ENCODE measurements at regions of chr10 and their contacts with region 1.

Region 1: GRCh38 chr10:89003344-89003743 is 12.7 kb downstream of the FAS start:
- DNase-seq: no peak
- H3K4me3 Mint-ChIP-seq: no peak overlapping the region
- H3K27ac Mint-ChIP-seq: peak overlapping the region; percentile 83
- H3K4me1 Mint-ChIP-seq: peaks cover 66% of the 10 kb centered on the region
- H3K27me3 Mint-ChIP-seq: no peaks in the 10 kb centered on the region

Region 2: DNA sequence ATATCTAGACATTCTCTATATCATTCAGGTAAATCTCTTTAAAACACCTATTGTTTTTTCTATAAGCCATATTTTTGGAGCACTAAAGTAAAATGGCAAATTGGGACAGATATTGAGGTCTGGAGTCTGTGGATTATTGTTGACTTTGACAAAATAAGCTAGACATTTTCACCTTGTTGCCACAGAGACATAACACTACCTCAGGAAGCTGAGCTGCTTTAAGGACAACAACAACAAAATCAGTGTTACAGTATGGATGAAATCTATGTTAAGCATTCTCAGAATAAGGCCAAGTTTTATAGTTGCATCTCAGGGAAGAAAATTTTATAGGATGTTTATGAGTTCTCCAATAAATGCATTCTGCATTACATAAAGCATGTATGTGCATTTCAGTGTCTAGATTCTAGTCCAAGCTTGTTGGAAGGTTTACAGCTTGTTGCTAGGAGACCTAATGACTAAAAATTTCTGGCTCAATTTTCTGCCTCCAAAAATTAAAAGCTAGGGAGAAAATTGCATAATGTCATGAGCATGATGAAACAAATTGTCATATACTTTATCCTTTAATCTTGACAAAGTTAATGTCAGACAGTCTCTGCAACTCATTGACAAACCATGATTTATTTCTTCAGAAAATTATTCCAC is 182.5 kb before region 1 on chr10:
- CTCF ChIA-PET with region 1: no interaction called
- POLR2A ChIA-PET with region 1: no interaction called
- intact Hi-C with region 1: loop called (anchors 1 kb)
- DNase-seq: no peak
- H3K4me3 Mint-ChIP-seq: no peak overlapping the region
- H3K27ac Mint-ChIP-seq: no peak overlapping the region
- H3K4me1 Mint-ChIP-seq: peaks cover 20% of the 10 kb centered on the region
- H3K27me3 Mint-ChIP-seq: no peaks in the 10 kb centered on the region

Region 3: GRCh38 chr10:88960802-88961201 is 42.5 kb before region 1 on chr10:
- CTCF ChIA-PET with region 1: interaction called, 4 read pairs
- POLR2A ChIA-PET with region 1: interaction called, 6 read pairs
- intact Hi-C with region 1: loop called (anchors 1 kb)
- DNase-seq: peak; percentile 46
- H3K4me3 Mint-ChIP-seq: no peak overlapping the region
- H3K27ac Mint-ChIP-seq: peak overlapping the region; percentile 73
- H3K4me1 Mint-ChIP-seq: peaks cover 29% of the 10 kb centered on the region
- H3K27me3 Mint-ChIP-seq: no peaks in the 10 kb centered on the region

Region 4: DNA sequence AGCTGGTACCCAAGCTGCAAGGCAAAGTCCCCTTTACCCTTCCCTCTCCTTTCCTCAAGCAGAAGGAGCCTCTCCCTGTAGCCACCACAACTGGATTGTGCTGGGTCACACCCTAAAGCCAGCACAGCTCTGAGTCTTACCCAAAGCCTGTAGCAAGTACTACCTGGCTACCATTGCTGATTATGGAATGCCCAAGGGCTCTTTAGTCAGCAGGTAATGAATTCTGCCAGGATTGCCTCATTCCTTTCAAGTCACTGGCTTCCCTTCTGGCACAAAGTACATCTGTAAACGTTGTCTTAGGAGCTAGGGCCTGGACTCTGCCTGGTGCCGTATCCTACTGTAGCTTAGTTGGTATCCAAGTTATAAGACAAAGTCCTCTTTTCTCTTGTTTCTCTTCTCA is 39.2 kb after region 1 on chr10:
- CTCF ChIA-PET with region 1: no interaction called
- POLR2A ChIA-PET with region 1: no interaction called
- intact Hi-C with region 1: no loop called
- DNase-seq: no peak
- H3K4me3 Mint-ChIP-seq: no peak overlapping the region
- H3K27ac Mint-ChIP-seq: no peak overlapping the region
- H3K4me1 Mint-ChIP-seq: peaks cover 5% of the 10 kb centered on the region
- H3K27me3 Mint-ChIP-seq: no peaks in the 10 kb centered on the region

Region 5: GRCh38 chr10:89138366-89139122 is 135.2 kb after region 1 on chr10:
- CTCF ChIA-PET with region 1: no interaction called
- POLR2A ChIA-PET with region 1: no interaction called
- intact Hi-C with region 1: no loop called
- DNase-seq: no peak
- H3K4me3 Mint-ChIP-seq: no peak overlapping the region
- H3K27ac Mint-ChIP-seq: no peak overlapping the region
- H3K4me1 Mint-ChIP-seq: peaks cover 2% of the 10 kb centered on the region
- H3K27me3 Mint-ChIP-seq: peaks cover 4% of the 10 kb centered on the region

Region 6: DNA sequence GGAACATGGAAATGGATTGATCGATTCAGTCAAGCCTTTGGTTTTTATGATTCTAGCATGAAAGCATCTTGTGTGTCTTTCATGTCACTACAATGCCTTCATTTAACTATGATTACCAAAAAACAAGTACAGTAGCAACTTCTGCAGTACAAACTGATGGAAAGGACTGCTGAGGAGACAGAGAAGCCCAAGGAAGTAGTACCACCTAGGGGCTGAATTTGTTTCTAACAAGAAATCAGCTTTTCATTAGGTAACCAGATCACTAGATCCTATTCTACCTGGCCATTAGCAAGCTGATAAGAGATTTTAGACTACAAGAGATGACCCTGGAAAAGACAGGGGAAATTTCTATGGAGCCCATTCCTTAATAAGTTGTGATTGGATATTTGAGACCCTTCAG is 385.9 kb after region 1 on chr10:
- CTCF ChIA-PET with region 1: no interaction called
- POLR2A ChIA-PET with region 1: no interaction called
- intact Hi-C with region 1: no loop called
- DNase-seq: no peak
- H3K4me3 Mint-ChIP-seq: no peak overlapping the region
- H3K27ac Mint-ChIP-seq: no peak overlapping the region
- H3K4me1 Mint-ChIP-seq: peaks cover 20% of the 10 kb centered on the region
- H3K27me3 Mint-ChIP-seq: peaks cover 1% of the 10 kb centered on the region